ENCODE measurements at regions of chr6 and their contacts with region 1.

Region 1: GRCh38 chr6:148947621-148948444 is 201.0 kb downstream of the UST start:
- DNase-seq: peak; percentile 52 to 64 (median 64)
- H3K4me3 ChIP-seq: no peak overlapping the region
- H3K4me3 Mint-ChIP-seq: no peak overlapping the region
- H3K27ac ChIP-seq: no peak overlapping the region
- H3K27ac Mint-ChIP-seq: no peak overlapping the region
- H3K4me1 ChIP-seq: no peaks in the 10 kb centered on the region
- H3K4me1 Mint-ChIP-seq: no peaks in the 10 kb centered on the region
- H3K27me3 ChIP-seq: no peaks in the 10 kb centered on the region
- H3K27me3 Mint-ChIP-seq: peaks cover 0 to 7% (median 6%) of the 10 kb centered on the region in 3 donors
- CTCF ChIP-seq: peak; percentile 88

Region 2: GRCh38 chr6:148578245-148578732 is 369.5 kb before region 1 on chr6:
- intact Hi-C with region 1: loop called (anchors 1 to 5 kb)
- DNase-seq: peak; percentile 67 to 73 (median 70)
- H3K4me3 ChIP-seq: no peak overlapping the region
- H3K4me3 Mint-ChIP-seq: no peak overlapping the region
- H3K27ac ChIP-seq: no peak overlapping the region
- H3K27ac Mint-ChIP-seq: peak overlapping the region in 1 of 7 donors; percentile 60
- H3K4me1 ChIP-seq: no peaks in the 10 kb centered on the region
- H3K4me1 Mint-ChIP-seq: peaks cover 7% of the 10 kb centered on the region
- H3K27me3 ChIP-seq: peaks cover 0 to 3% of the 10 kb centered on the region in 2 donors
- H3K27me3 Mint-ChIP-seq: peaks cover 8 to 17% (median 10%) of the 10 kb centered on the region in 3 donors
- CTCF ChIP-seq: peak; percentile 87